Aorta (tissue), 5 donors: ENCODE measurements at regions of chr6 and their contacts with region 1.

Region 1: DNA sequence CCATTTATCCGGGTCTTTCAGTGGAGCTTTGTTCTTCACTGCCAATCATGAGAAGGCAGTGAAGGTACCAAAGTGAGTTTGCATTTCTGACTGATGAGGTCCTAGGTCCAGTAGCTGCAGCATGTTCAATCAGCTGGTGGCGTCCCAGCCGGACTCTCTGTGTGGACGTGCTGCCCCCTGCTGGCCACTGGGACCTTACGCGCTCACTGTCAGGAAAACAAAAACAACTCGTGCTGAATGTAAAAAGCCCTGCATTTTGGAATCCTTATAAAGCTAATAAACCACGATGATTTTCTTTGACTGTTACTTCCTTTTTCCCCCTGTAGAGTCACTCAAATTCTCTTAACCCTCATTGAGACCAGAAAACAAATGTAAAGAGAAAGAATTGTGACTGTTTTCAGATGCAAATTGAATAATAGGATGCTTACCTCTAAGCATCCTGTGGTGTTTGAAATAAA is 4.9 kb upstream of the CD24 start:
- DNase-seq: peak; percentile 85 to 94
- ATAC-seq: peak; percentile 89
- H3K4me3 ChIP-seq: no peak overlapping the region
- H3K27ac ChIP-seq: no peak overlapping the region
- H3K4me1 ChIP-seq: no peaks in the 10 kb centered on the region
- H3K27me3 ChIP-seq: no peaks in the 10 kb centered on the region

Region 2: DNA sequence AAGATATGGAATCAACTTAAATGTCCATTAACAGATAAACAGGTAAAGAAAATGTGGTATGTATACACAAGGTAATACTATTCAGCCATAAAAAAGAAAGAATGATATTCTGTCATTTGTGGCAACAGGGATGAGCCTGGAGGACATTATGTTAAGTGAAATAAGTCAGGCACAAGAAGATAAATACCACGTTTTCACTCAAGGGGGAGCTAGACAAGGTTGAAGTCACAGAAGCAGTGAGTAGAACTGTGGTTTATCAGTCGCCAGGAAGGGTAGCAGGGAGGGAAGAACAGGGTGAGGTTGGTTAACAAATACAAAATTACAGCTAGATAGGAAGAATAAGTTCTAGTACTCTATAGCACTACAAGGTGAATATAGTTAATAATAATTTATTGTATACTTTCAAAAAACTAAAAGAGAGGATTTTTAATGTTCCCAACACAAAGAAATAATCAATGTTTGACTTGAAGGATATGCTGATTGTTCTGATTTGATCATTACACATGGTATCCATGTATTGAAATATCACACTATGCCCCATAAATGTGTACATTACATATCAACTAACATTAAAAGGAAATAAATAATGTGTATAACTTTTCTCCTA is 371.3 kb before region 1 on chr6:
- intact Hi-C with region 1: loop called (anchors 2 to 5 kb)
- DNase-seq: no peak
- ATAC-seq: no peak
- H3K4me3 ChIP-seq: no peak overlapping the region
- H3K27ac ChIP-seq: no peak overlapping the region
- H3K4me1 ChIP-seq: no peaks in the 10 kb centered on the region
- H3K27me3 ChIP-seq: no peaks in the 10 kb centered on the region